Calu3 (cell line): ENCODE measurements at regions of chr7 and their contacts with region 1.

Region 1: GRCh38 chr7:42931834-42932651 is at the starts of genes MRPL32 and PSMA2:
- DNase-seq: peak; percentile 98
- H3K4me3 Mint-ChIP-seq: peak within 1 kb of the TSS; percentile 100
- H3K27ac Mint-ChIP-seq: peak within 1 kb of the TSS; percentile 99
- H3K4me1 Mint-ChIP-seq: peaks cover 26% of the 10 kb centered on the region
- H3K27me3 Mint-ChIP-seq: no peaks in the 10 kb centered on the region
- CTCF ChIP-seq: no peak
- total RNA-seq, gene MRPL32: 86.4 and 87.8 TPM in 2 replicates
- total RNA-seq, gene PSMA2: 191 and 208 TPM in 2 replicates

Region 2: GRCh38 chr7:43058271-43059066 is 126.4 kb after region 1 on chr7:
- CTCF ChIA-PET with region 1: no interaction called
- intact Hi-C with region 1: no loop called
- DNase-seq: no peak
- H3K4me3 Mint-ChIP-seq: no peak overlapping the region
- H3K27ac Mint-ChIP-seq: no peak overlapping the region
- H3K4me1 Mint-ChIP-seq: no peaks in the 10 kb centered on the region
- H3K27me3 Mint-ChIP-seq: peaks cover 17% of the 10 kb centered on the region
- CTCF ChIP-seq: no peak

Region 3: GRCh38 chr7:43135129-43135528 is 203.1 kb after region 1 on chr7:
- CTCF ChIA-PET with region 1: interaction called, 10 read pairs
- intact Hi-C with region 1: no loop called
- DNase-seq: no peak
- H3K4me3 Mint-ChIP-seq: no peak overlapping the region
- H3K27ac Mint-ChIP-seq: no peak overlapping the region
- H3K4me1 Mint-ChIP-seq: no peaks in the 10 kb centered on the region
- H3K27me3 Mint-ChIP-seq: peaks cover 24% of the 10 kb centered on the region
- CTCF ChIP-seq: no peak

Region 4: GRCh38 chr7:43314379-43315189 is 382.5 kb after region 1 on chr7:
- CTCF ChIA-PET with region 1: no interaction called
- intact Hi-C with region 1: no loop called
- DNase-seq: no peak
- H3K4me3 Mint-ChIP-seq: no peak overlapping the region
- H3K27ac Mint-ChIP-seq: no peak overlapping the region
- H3K4me1 Mint-ChIP-seq: no peaks in the 10 kb centered on the region
- H3K27me3 Mint-ChIP-seq: peaks cover 21% of the 10 kb centered on the region
- CTCF ChIP-seq: no peak

Region 5: GRCh38 chr7:43590862-43591550 is 659.0 kb after region 1 on chr7:
- CTCF ChIA-PET with region 1: no interaction called
- intact Hi-C with region 1: loop called (anchors 5 kb)
- DNase-seq: no peak
- H3K4me3 Mint-ChIP-seq: peak overlapping the region; percentile 52
- H3K27ac Mint-ChIP-seq: peak overlapping the region; percentile 96
- H3K4me1 Mint-ChIP-seq: peaks cover 70% of the 10 kb centered on the region
- H3K27me3 Mint-ChIP-seq: no peaks in the 10 kb centered on the region
- CTCF ChIP-seq: no peak